Activated CD4-positive, alpha-beta memory T cell treated with anti-CD3 and anti-CD28 coated beads for 36 hours (primary cell): ENCODE measurements at regions of chr12 and their contacts with region 1.

Region 1: GRCh38 chr12:12724661-12725545 is 7.7 kb downstream of the CDKN1B start:
- DNase-seq: peak; percentile 95
- H3K4me3 Mint-ChIP-seq: peak overlapping the region; percentile 95
- H3K27ac Mint-ChIP-seq: peak overlapping the region; percentile 97
- H3K4me1 Mint-ChIP-seq: peaks cover 50% of the 10 kb centered on the region
- H3K27me3 Mint-ChIP-seq: peaks cover 2% of the 10 kb centered on the region

Region 2: GRCh38 chr12:12356886-12357718 is 367.8 kb before region 1 on chr12 and contains the start of gene BORCS5:
- CTCF ChIA-PET with region 1: interaction called, 6 read pairs
- POLR2A ChIA-PET with region 1: interaction called, 19 read pairs
- intact Hi-C with region 1: loop called (anchors 1 kb)
- DNase-seq: peak; percentile 99
- H3K4me3 Mint-ChIP-seq: peak within 1 kb of the TSS; percentile 98
- H3K27ac Mint-ChIP-seq: peak within 1 kb of the TSS; percentile 99
- H3K4me1 Mint-ChIP-seq: peaks cover 43% of the 10 kb centered on the region
- H3K27me3 Mint-ChIP-seq: no peaks in the 10 kb centered on the region
- total RNA-seq, gene BORCS5: 43.7 to 47.8 TPM

Region 3: GRCh38 chr12:12611512-12612306 is 113.2 kb before region 1 on chr12 and contains the start of gene CREBL2:
- CTCF ChIA-PET with region 1: no interaction called
- POLR2A ChIA-PET with region 1: interaction called, 5 read pairs
- intact Hi-C with region 1: loop called (anchors 1 kb)
- DNase-seq: peak; percentile 92
- H3K4me3 Mint-ChIP-seq: peak within 1 kb of the TSS; percentile 82
- H3K27ac Mint-ChIP-seq: peak within 1 kb of the TSS; percentile 95
- H3K4me1 Mint-ChIP-seq: peaks cover 54% of the 10 kb centered on the region
- H3K27me3 Mint-ChIP-seq: no peaks in the 10 kb centered on the region
- total RNA-seq, gene CREBL2: 30.4 to 32.2 TPM

Region 4: DNA sequence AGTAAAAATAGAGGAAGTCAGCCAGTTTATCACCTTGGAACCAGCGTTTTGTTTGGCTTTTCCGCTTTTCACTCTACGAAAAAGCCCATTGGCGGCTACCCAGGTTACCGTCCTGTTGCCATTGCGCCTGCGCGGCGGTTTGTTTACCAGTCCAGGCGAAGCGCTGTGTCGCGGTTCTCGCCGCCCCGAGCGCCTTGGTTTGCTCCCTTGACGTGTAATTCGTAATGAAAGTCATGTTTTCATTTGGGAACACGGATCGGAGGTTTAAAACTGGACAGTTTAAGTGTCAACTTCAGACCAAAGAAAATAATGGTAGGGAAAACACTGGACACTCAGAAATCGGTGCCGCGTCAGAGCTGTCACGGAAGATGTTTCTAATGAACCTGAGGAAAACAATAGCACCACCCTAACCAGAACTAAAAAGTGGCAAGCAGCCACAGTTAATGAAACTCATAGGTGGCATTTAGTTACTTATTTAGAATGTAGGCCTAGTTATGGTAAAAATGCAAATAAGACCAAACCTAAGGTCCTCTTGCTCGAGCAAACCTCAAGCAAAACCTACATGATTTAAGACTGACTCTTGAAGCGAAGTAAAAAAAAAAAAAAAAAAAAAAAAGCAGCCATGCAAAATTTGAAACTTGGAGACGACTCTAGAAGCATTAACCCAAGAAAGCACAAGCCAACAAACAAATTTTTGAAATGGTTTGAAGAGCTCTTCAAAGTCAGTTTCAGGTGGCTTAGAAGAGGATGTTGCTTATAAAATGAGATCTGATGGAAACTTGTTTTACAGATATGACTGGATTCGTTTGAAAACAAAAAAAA is 28.1 kb before region 1 on chr12:
- CTCF ChIA-PET with region 1: interaction called, 7 read pairs
- POLR2A ChIA-PET with region 1: interaction called, 133 read pairs
- intact Hi-C with region 1: loop called (anchors 1 kb)
- DNase-seq: peak; percentile 92
- H3K4me3 Mint-ChIP-seq: peak overlapping the region; percentile 92
- H3K27ac Mint-ChIP-seq: peak overlapping the region; percentile 98
- H3K4me1 Mint-ChIP-seq: peaks cover 65% of the 10 kb centered on the region
- H3K27me3 Mint-ChIP-seq: no peaks in the 10 kb centered on the region

Region 5: DNA sequence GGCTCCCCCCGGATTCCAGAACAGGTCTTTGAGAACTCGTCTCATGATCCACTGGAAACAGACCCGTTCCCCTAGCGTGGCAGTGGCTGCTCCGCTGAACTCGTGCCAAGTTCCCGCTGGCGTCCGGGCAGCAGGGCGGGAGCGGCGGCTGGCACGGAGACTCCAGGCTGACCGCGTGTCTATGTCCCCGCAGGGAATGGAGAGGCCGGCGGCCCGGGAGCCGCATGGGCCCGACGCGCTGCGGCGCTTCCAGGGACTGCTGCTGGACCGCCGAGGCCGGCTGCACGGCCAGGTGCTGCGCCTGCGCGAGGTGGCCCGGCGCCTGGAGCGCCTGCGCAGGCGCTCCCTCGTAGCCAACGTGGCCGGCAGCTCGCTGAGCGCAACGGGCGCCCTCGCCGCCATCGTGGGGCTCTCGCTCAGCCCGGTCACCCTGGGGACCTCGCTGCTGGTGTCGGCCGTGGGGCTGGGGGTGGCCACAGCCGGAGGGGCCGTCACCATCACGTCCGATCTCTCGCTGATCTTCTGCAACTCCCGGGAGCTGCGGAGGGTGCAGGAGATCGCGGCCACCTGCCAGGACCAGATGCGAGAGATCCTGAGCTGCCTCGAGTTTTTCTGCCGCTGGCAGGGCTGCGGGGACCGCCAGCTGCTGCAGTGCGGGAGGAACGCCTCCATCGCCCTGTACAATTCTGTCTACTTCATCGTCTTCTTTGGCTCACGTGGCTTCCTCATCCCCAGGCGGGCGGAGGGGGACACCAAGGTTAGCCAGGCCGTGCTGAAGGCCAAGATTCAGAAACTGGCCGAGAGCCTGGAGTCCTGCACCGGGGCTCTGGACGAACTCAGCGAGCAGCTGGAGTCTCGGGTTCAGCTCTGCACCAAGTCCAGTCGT is 62.1 kb after region 1 on chr12:
- CTCF ChIA-PET with region 1: interaction called, 3 read pairs
- POLR2A ChIA-PET with region 1: interaction called, 10 read pairs
- intact Hi-C with region 1: loop called (anchors 5 kb)
- DNase-seq: peak; percentile 80
- H3K4me3 Mint-ChIP-seq: peak overlapping the region; percentile 83
- H3K27ac Mint-ChIP-seq: peak overlapping the region; percentile 80
- H3K4me1 Mint-ChIP-seq: peaks cover 36% of the 10 kb centered on the region
- H3K27me3 Mint-ChIP-seq: no peaks in the 10 kb centered on the region

Region 6: DNA sequence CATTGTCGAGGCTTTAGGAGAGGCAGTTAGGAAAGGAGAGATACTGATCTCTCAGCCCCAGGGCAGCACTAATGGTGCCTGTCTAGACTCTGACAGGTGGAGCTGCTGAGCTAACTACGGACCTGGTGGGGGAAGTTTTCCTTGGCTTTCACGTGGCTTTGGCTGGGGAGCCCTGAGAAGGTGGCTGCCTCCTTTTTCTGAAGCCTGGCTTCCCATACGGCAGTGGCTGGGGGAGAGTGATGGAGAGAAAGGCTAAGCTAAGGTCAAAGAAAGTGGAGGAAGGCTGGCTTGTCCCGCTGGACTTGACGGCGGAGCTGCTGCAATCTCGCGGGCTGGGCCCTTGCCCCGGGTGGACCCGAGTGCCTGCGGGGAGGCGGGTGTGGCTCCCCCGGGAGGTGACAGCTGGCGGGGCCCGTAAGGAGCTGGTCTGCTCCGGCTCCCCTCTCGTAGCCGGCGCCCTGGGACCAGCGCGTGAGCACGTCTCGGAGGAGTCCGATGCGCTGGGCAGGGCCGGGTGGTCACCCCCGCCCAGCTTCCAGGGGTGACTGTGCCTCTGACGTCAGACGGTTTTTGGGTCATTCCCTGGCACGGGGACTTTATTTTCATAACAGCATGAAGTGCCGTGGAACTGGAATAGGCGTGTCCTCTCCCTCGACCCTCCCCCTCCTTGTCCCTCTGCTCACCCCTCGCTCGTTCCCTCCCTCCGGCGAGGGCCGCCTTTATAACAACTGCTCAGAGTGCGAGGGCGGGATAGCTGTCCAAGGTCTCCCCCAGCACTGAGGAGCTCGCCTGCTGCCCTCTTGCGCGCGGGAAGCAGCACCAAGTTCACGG is 166.1 kb after region 1 on chr12 and contains the start of gene GPRC5A:
- CTCF ChIA-PET with region 1: no interaction called
- POLR2A ChIA-PET with region 1: no interaction called
- intact Hi-C with region 1: loop called (anchors 10 kb)
- DNase-seq: peak; percentile 63
- H3K4me3 Mint-ChIP-seq: peak within 1 kb of the TSS; percentile 68
- H3K27ac Mint-ChIP-seq: no peak within 1 kb of the TSS
- H3K4me1 Mint-ChIP-seq: peaks cover 11% of the 10 kb centered on the region
- H3K27me3 Mint-ChIP-seq: peaks cover 41% of the 10 kb centered on the region
- total RNA-seq, gene GPRC5A: 0.07 to 0.10 TPM